ENCODE measurements at regions of chr10 and their contacts with region 1.

Region 1: GRCh38 chr10:25651534-25651933 is 282.5 kb upstream of the MYO3A start:
- DNase-seq: no peak
- H3K4me3 ChIP-seq: no peak overlapping the region
- H3K27ac ChIP-seq: no peak overlapping the region
- H3K4me1 ChIP-seq: no peaks in the 10 kb centered on the region
- H3K27me3 ChIP-seq: no peaks in the 10 kb centered on the region
- CTCF ChIP-seq: no peak

Region 2: DNA sequence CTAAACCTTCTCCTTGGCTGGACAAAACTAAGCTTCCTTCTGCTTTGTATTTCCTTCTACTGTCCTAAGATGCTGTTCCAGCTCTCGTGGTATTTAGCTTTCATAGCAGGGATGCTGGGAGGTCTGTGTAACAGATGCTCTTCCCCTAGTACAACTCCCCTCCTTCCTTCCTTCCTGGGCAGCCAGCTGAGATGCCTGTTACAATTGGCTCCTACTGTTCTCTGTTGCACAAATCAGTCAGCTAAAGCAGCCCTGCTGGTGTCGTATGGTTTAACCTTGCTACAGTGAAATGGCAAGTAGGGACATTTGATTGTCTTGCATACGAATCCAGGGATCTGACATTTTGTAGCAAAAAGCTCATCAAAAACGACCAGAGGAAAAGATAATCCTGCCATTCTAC is 1071.6 kb before region 1 on chr10:
- CTCF ChIA-PET with region 1: interaction called, 10 read pairs
- POLR2A ChIA-PET with region 1: no interaction called
- intact Hi-C with region 1: no loop called
- DNase-seq: no peak
- H3K4me3 ChIP-seq: no peak overlapping the region
- H3K27ac ChIP-seq: no peak overlapping the region
- H3K4me1 ChIP-seq: no peaks in the 10 kb centered on the region
- H3K27me3 ChIP-seq: no peaks in the 10 kb centered on the region
- CTCF ChIP-seq: no peak

Measured in PC-9 (cell line).